Lower leg skin (tissue), 4 donors: ENCODE measurements at regions of chr14 and their contacts with region 1.

Region 1: GRCh38 chr14:65986041-65986440 is 500.1 kb upstream of the CCDC196 start:
- DNase-seq: no peak
- H3K4me3 ChIP-seq: no peak overlapping the region
- CTCF ChIP-seq: no peak
- POLR2A ChIP-seq: no peak

Region 2: DNA sequence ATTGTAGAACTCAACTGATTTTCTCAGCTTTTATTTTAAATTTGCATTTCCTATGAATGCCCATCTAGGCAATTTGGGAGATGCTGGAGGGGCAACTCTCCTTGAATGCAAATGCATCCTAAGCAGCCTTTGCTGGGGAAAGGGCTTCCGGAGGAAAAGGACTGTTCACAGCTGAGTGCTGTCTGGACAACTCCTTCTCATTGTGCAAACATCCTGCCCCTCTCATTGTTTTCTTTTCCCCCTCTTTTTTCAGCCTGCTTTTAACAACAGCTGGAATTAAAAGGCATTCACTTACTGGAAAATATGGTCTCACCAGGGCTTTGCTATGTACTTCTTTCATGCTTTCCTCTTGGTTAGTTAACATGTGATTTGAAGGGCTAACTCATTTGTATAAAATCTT is 175.7 kb before region 1 on chr14:
- intact Hi-C with region 1: no loop called
- DNase-seq: no peak
- H3K4me3 ChIP-seq: no peak overlapping the region
- CTCF ChIP-seq: no peak
- POLR2A ChIP-seq: no peak

Region 3: DNA sequence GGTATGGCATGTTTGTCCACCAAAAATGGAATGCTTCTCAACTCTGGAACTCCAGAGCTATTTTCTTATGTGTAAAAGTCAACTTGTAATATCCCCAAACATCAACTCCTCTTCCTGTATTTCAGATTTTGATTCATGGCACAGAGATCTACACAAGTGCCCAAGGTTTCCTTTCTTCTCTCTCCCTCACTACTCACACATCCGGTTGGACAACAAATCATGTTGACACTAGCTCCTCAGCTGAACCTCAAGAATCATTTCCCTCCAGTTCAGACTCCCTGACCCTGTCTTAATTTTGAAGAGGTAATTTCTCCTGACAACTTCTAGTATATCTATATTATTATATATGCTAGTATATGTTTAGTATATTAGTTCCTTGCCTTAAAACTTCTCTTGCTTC is 14.7 kb after region 1 on chr14:
- intact Hi-C with region 1: loop called (anchors 1 kb)
- DNase-seq: no peak
- H3K4me3 ChIP-seq: no peak overlapping the region
- CTCF ChIP-seq: no peak
- POLR2A ChIP-seq: no peak

Region 4: GRCh38 chr14:66174453-66174891 is 188.4 kb after region 1 on chr14:
- intact Hi-C with region 1: no loop called
- DNase-seq: no peak
- H3K4me3 ChIP-seq: no peak overlapping the region
- CTCF ChIP-seq: no peak
- POLR2A ChIP-seq: no peak